Naive thymus-derived CD4-positive, alpha-beta T cell (primary cell): ENCODE measurements at regions of chr11 and their contacts with region 1.

Region 1: DNA sequence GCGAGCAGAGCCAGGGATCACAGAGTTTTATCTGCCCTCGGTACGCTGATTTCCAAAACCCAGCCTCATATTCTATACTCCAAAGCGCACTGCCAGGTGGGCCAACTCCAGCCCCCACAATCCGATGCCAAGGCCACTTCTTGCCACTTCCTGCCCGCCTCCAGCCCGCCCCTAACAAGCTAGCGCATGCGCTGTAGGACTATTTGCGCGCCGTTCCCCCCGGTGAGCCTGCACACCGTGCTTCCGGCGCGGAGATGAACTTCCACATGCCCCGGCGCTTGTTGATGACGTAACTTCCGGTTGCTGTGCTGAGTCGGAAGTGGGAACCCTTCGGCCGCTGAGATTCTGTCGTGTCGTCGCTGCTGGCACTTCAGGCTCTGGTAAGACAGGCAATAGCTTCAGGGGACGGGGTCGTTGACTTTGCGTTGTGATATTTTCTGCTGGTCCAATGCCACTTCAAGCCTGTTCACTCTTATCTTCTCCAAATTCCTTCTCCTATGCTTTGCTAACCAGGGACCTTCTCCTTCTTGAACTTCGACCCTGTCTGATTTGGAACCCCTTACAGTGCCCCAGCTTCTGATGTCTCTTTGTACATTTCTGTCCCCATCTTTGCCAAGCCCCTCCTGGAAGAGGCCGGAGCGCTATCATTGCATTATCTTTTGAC is at the start of gene UBE4A:
- DNase-seq: peak; percentile 89 to 96 (median 95)
- ATAC-seq: peak; percentile 96
- H3K4me3 ChIP-seq: peak within 1 kb of the TSS; percentile 87
- H3K4me3 Mint-ChIP-seq: peak within 1 kb of the TSS; percentile 92 to 99 (median 96)
- H3K27ac ChIP-seq: peak within 1 kb of the TSS; percentile 93
- H3K27ac Mint-ChIP-seq: peak within 1 kb of the TSS; percentile 96 to 100 (median 98)
- H3K4me1 ChIP-seq: peaks cover 18 to 27% of the 10 kb centered on the region in 2 donors
- H3K4me1 Mint-ChIP-seq: peaks cover 30 to 61% (median 51%) of the 10 kb centered on the region in 7 donors
- H3K27me3 ChIP-seq: no peaks in the 10 kb centered on the region
- H3K27me3 Mint-ChIP-seq: peaks cover 0 to 6% (median 0%) of the 10 kb centered on the region in 5 donors
- total RNA-seq, gene UBE4A: 38.4 to 54.5 (median 46.9) TPM

Region 2: GRCh38 chr11:118295834-118296454 is 63.5 kb before region 1 on chr11:
- CTCF ChIA-PET with region 1: interaction called, 90 read pairs
- POLR2A ChIA-PET with region 1: interaction called, 10 read pairs
- intact Hi-C with region 1: no loop called
- DNase-seq: peak in 7 of 9 donors; percentile 38 to 60 (median 52)
- ATAC-seq: peak; percentile 74
- H3K4me3 ChIP-seq: no peak overlapping the region
- H3K4me3 Mint-ChIP-seq: no peak overlapping the region
- H3K27ac ChIP-seq: peak overlapping the region; percentile 44
- H3K27ac Mint-ChIP-seq: peak overlapping the region; percentile 39 to 84 (median 61)
- H3K4me1 ChIP-seq: peaks cover 0 to 15% of the 10 kb centered on the region in 2 donors
- H3K4me1 Mint-ChIP-seq: peaks cover 13 to 34% (median 30%) of the 10 kb centered on the region in 7 donors
- H3K27me3 ChIP-seq: no peaks in the 10 kb centered on the region
- H3K27me3 Mint-ChIP-seq: no peaks in the 10 kb centered on the region

Region 3: GRCh38 chr11:118338637-118339061 is 20.8 kb before region 1 on chr11:
- CTCF ChIA-PET with region 1: interaction called, 8 read pairs
- POLR2A ChIA-PET with region 1: interaction called, 20 read pairs
- intact Hi-C with region 1: no loop called
- DNase-seq: peak; percentile 46 to 99 (median 92)
- ATAC-seq: peak; percentile 82
- H3K4me3 ChIP-seq: peak overlapping the region; percentile 88
- H3K4me3 Mint-ChIP-seq: peak overlapping the region; percentile 89 to 98 (median 96)
- H3K27ac ChIP-seq: peak overlapping the region; percentile 96
- H3K27ac Mint-ChIP-seq: peak overlapping the region; percentile 95 to 100 (median 99)
- H3K4me1 ChIP-seq: peaks cover 46 to 50% of the 10 kb centered on the region in 2 donors
- H3K4me1 Mint-ChIP-seq: peaks cover 28 to 68% (median 55%) of the 10 kb centered on the region in 7 donors
- H3K27me3 ChIP-seq: no peaks in the 10 kb centered on the region
- H3K27me3 Mint-ChIP-seq: no peaks in the 10 kb centered on the region

Region 4: GRCh38 chr11:118401151-118401878 is 41.9 kb after region 1 on chr11 and contains the start of gene ATP5MG:
- CTCF ChIA-PET with region 1: interaction called, 4 read pairs
- POLR2A ChIA-PET with region 1: interaction called, 8 read pairs
- intact Hi-C with region 1: loop called (anchors 1 to 2 kb)
- DNase-seq: peak; percentile 83 to 96 (median 93)
- ATAC-seq: peak; percentile 71
- H3K4me3 ChIP-seq: peak within 1 kb of the TSS; percentile 79
- H3K4me3 Mint-ChIP-seq: peak within 1 kb of the TSS; percentile 97 to 99 (median 98)
- H3K27ac ChIP-seq: peak within 1 kb of the TSS; percentile 97
- H3K27ac Mint-ChIP-seq: peak within 1 kb of the TSS; percentile 97 to 100 (median 100)
- H3K4me1 ChIP-seq: peaks cover 37 to 58% of the 10 kb centered on the region in 2 donors
- H3K4me1 Mint-ChIP-seq: peaks cover 39 to 78% (median 71%) of the 10 kb centered on the region in 7 donors
- H3K27me3 ChIP-seq: no peaks in the 10 kb centered on the region
- H3K27me3 Mint-ChIP-seq: peaks cover 0 to 2% (median 0%) of the 10 kb centered on the region in 5 donors
- total RNA-seq, gene ATP5MG: 140 to 241 (median 154) TPM

Region 5: GRCh38 chr11:118565051-118565450 is 205.6 kb after region 1 on chr11:
- CTCF ChIA-PET with region 1: no interaction called
- POLR2A ChIA-PET with region 1: no interaction called
- intact Hi-C with region 1: loop called (anchors 1 to 2 kb)
- DNase-seq: no peak
- ATAC-seq: no peak
- H3K4me3 ChIP-seq: no peak overlapping the region
- H3K4me3 Mint-ChIP-seq: peak overlapping the region; percentile 26 to 96 (median 80)
- H3K27ac ChIP-seq: peak overlapping the region; percentile 48
- H3K27ac Mint-ChIP-seq: peak overlapping the region; percentile 54 to 97 (median 88)
- H3K4me1 ChIP-seq: no peaks in the 10 kb centered on the region
- H3K4me1 Mint-ChIP-seq: peaks cover 9 to 29% (median 20%) of the 10 kb centered on the region in 7 donors
- H3K27me3 ChIP-seq: no peaks in the 10 kb centered on the region
- H3K27me3 Mint-ChIP-seq: no peaks in the 10 kb centered on the region

Region 6: GRCh38 chr11:118652681-118653181 is 293.3 kb after region 1 on chr11:
- CTCF ChIA-PET with region 1: no interaction called
- POLR2A ChIA-PET with region 1: no interaction called
- intact Hi-C with region 1: no loop called
- DNase-seq: no peak
- ATAC-seq: peak; percentile 45
- H3K4me3 ChIP-seq: no peak overlapping the region
- H3K4me3 Mint-ChIP-seq: no peak overlapping the region
- H3K27ac ChIP-seq: no peak overlapping the region
- H3K27ac Mint-ChIP-seq: peak overlapping the region in 6 of 9 donors; percentile 6 to 58 (median 16)
- H3K4me1 ChIP-seq: no peaks in the 10 kb centered on the region
- H3K4me1 Mint-ChIP-seq: peaks cover 6 to 18% (median 11%) of the 10 kb centered on the region in 7 donors
- H3K27me3 ChIP-seq: no peaks in the 10 kb centered on the region
- H3K27me3 Mint-ChIP-seq: no peaks in the 10 kb centered on the region